ENCODE measurements at regions of chr3 and their contacts with region 1.

Region 1: GRCh38 chr3:157572559-157573270 is 69.5 kb upstream of the VEPH1 start:
- DNase-seq: no peak
- ATAC-seq: peak; percentile 36

Region 2: DNA sequence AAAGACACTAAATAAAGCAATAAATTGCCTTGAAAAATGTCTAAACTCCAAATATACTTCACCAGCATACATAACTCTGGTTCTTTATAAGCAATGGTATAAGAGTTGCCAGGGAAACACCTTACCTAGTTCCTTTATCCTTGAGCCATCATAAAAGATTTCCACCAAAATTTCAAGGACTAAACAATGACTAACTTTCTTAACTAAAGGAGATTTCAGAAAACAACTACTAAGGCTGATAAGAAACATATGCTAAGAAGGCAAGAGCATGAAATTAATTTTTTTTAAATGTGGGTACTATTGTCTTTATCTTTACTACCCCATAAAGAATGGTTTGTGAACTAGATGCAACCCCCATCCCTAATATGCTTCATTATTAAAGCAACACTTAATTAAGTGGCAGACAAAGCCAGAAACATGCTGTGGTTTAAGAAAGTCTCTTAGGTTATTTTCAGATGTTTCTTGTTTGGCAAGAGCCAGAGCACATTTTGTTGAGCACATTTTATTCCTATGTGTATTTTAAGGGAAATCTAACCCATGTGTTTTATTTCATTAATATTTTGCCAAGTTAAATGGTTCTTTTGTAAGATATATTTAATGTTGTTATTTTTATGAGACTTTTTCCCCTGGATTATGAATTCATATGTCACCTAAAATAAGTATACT is 52.1 kb before region 1 on chr3:
- intact Hi-C with region 1: no loop called
- DNase-seq: no peak
- ATAC-seq: peak; percentile 90

Region 3: DNA sequence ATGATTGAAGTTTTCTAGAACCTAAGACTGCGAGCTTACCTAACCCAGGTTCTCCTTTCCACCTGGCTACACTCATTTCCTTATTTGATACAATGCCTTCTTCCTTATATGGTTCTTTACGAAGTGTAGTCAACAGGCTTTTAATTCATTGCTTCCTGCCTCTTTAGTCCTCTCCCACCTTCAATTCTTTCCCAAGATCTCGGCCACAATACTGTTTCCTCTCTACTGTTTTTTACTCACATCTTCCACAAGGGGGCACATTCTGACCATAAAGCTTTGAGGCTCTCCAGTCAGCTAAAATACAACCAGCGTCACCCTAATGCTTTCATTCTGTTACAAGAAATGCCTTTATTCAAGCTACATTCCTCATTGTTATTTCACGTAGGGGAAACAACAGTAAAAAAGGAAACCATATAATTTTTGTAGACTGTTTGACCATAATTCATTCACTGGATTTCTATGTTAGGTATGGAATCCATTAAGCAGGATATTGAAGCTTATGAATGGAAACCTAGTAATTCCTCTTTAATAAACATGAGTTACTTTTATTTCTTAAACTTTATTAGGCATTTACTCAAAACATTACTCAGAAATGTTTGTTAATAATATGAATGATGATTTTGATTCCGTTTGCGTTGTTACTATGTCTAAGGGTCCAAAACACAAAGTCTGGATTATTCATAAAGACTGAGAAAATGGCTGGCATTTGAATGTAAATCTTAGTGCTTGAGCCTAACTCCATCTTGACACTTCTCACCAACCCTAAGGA is 40.0 kb before region 1 on chr3:
- intact Hi-C with region 1: loop called (anchors 5 kb)
- DNase-seq: no peak
- ATAC-seq: peak; percentile 90

Region 4: GRCh38 chr3:157669416-157669815 is 96.7 kb after region 1 on chr3:
- intact Hi-C with region 1: no loop called
- DNase-seq: no peak
- ATAC-seq: no peak